Endothelial cell of umbilical vein (primary cell): ENCODE measurements at regions of chr1 and their contacts with region 1.

Region 1: DNA sequence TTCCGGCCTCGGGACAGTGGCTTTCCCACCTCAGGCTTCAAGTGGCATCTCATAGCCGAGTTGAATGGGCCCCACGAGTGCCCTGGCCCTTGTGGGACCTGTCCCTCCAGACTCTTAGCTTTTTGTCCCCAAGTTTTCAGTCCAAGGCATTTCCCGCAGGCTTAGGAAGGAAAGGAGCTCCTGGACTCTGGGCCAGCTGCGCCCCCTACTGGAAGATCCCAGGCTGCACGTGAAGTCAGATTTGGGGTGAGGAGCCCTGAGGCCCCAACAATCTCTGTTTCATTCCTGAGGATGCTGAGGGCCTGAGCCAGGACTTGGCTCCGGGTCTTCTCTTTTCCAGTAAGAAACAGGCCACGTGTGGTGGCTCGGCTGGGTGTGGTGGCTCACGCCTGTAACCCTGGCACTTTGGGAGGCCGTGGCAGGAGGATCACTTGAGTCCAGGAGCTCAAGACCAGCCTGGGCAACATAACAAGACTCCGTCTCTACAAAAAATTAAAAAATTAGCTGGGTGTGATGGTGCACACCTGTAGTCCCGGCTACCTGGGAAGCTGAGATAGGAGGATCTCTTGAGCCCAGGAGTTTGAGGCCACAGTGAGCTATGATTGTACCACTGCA is 67.4 kb downstream of the ARHGEF10L start:
- DNase-seq: peak; percentile 48
- H3K4me3 ChIP-seq: no peak overlapping the region
- H3K27ac ChIP-seq: no peak overlapping the region
- H3K4me1 ChIP-seq: no peaks in the 10 kb centered on the region
- H3K27me3 ChIP-seq: no peaks in the 10 kb centered on the region
- CTCF ChIP-seq: peak; percentile 86 to 94
- POLR2A ChIP-seq: no peak

Region 2: GRCh38 chr1:17274186-17275170 is 332.5 kb before region 1 on chr1:
- CTCF ChIA-PET with region 1: no interaction called
- POLR2A ChIA-PET with region 1: no interaction called
- dilution Hi-C with region 1: no loop called
- intact Hi-C with region 1: no loop called
- DNase-seq: peak; percentile 36
- H3K4me3 ChIP-seq: no peak overlapping the region
- H3K27ac ChIP-seq: no peak overlapping the region
- H3K4me1 ChIP-seq: no peaks in the 10 kb centered on the region
- H3K27me3 ChIP-seq: no peaks in the 10 kb centered on the region
- CTCF ChIP-seq: peak; percentile 72 to 91
- POLR2A ChIP-seq: no peak

Region 3: DNA sequence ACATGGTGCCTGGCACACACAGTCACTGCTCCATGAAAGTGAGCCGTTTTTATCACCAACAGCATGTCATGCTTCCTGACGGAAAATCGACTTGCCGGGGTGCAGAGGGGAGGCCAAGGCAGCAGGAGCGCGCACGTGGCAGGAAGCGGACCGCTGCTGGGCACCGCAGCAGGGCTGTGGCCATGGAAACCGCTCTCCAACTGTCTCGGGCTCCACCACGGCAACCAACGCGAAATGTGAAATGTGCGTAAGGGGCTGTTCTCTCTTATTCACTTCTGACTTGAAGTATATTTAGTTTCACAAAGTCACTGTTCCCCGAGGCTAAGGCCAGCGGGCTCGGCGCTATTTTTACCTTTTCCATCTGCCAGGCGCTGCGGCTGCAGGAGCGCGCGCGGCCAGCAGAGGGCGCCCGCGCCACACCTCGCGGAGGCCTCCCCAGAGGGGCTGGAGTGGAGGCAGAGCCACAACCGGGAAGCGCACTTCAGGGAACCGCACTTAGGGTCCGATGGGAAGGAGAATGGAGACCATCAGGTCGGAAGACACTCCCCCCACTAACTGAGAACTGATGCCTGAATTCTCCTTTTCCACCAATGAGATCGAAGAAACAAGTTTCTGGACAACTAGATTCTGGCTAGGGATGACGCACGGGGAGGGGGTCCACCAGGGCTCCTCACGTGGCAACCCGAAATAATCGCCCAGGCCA is 187.2 kb before region 1 on chr1:
- CTCF ChIA-PET with region 1: interaction called, 3 read pairs
- POLR2A ChIA-PET with region 1: no interaction called
- dilution Hi-C with region 1: no loop called
- intact Hi-C with region 1: loop called (anchors 1 kb)
- DNase-seq: peak; percentile 57
- H3K4me3 ChIP-seq: no peak overlapping the region
- H3K27ac ChIP-seq: no peak overlapping the region
- H3K4me1 ChIP-seq: no peaks in the 10 kb centered on the region
- H3K27me3 ChIP-seq: no peaks in the 10 kb centered on the region
- CTCF ChIP-seq: peak; percentile 99
- POLR2A ChIP-seq: no peak

Region 4: DNA sequence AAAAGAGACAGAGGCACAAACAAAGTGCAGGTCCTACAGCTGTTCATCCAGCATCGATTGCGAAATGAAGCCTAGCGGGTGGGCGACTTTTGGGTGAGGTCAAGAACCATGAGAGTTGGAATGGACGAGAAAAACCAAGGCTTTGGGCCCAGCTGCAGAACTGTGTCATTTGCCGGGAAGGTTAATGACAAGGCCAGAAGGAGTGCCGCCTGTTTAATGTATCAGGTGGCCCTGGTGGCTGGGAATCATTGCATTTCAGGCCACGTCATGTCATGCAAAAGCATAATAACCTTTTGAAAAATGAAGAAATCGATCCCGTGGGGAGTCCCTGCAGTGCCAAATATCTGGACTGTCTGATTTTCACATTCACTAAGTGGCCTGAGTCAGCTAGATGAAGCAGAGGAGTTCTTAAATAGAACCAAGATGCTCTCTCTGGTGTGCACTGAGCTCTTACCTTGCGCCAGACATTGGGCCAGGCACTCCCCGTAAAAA is 159.4 kb before region 1 on chr1:
- CTCF ChIA-PET with region 1: no interaction called
- POLR2A ChIA-PET with region 1: no interaction called
- dilution Hi-C with region 1: no loop called
- intact Hi-C with region 1: no loop called
- DNase-seq: no peak
- H3K4me3 ChIP-seq: no peak overlapping the region
- H3K27ac ChIP-seq: no peak overlapping the region
- H3K4me1 ChIP-seq: no peaks in the 10 kb centered on the region
- H3K27me3 ChIP-seq: peaks cover 0 to 3% of the 10 kb centered on the region in 2 experiments
- CTCF ChIP-seq: no peak
- POLR2A ChIP-seq: no peak

Region 5: GRCh38 chr1:17460245-17460644 is 146.7 kb before region 1 on chr1:
- CTCF ChIA-PET with region 1: no interaction called
- POLR2A ChIA-PET with region 1: no interaction called
- dilution Hi-C with region 1: no loop called
- intact Hi-C with region 1: no loop called
- DNase-seq: no peak
- H3K4me3 ChIP-seq: no peak overlapping the region
- H3K27ac ChIP-seq: no peak overlapping the region
- H3K4me1 ChIP-seq: no peaks in the 10 kb centered on the region
- H3K27me3 ChIP-seq: no peaks in the 10 kb centered on the region
- CTCF ChIP-seq: no peak
- POLR2A ChIP-seq: no peak

Region 6: GRCh38 chr1:17502326-17502778 is 104.6 kb before region 1 on chr1:
- CTCF ChIA-PET with region 1: interaction called, 374 read pairs
- POLR2A ChIA-PET with region 1: interaction called, 3 read pairs
- dilution Hi-C with region 1: no loop called
- intact Hi-C with region 1: loop called (anchors 1 kb)
- DNase-seq: peak; percentile 50
- H3K4me3 ChIP-seq: no peak overlapping the region
- H3K27ac ChIP-seq: no peak overlapping the region
- H3K4me1 ChIP-seq: no peaks in the 10 kb centered on the region
- H3K27me3 ChIP-seq: no peaks in the 10 kb centered on the region
- CTCF ChIP-seq: peak; percentile 82 to 92
- POLR2A ChIP-seq: no peak

Region 7: GRCh38 chr1:17540255-17541001 is 66.5 kb before region 1 on chr1:
- CTCF ChIA-PET with region 1: interaction called, 20 read pairs
- POLR2A ChIA-PET with region 1: no interaction called
- dilution Hi-C with region 1: no loop called
- intact Hi-C with region 1: no loop called
- DNase-seq: no peak
- H3K4me3 ChIP-seq: peak overlapping the region; percentile 34 to 77 (median 62)
- H3K27ac ChIP-seq: peak overlapping the region; percentile 25
- H3K4me1 ChIP-seq: no peaks in the 10 kb centered on the region
- H3K27me3 ChIP-seq: peaks cover 3 to 6% of the 10 kb centered on the region in 2 experiments
- CTCF ChIP-seq: no peak
- POLR2A ChIP-seq: no peak

Region 8: GRCh38 chr1:17581389-17582123 is 25.4 kb before region 1 on chr1:
- CTCF ChIA-PET with region 1: interaction called, 31 read pairs
- POLR2A ChIA-PET with region 1: no interaction called
- dilution Hi-C with region 1: no loop called
- intact Hi-C with region 1: no loop called
- DNase-seq: no peak
- H3K4me3 ChIP-seq: no peak overlapping the region
- H3K27ac ChIP-seq: no peak overlapping the region
- H3K4me1 ChIP-seq: no peaks in the 10 kb centered on the region
- H3K27me3 ChIP-seq: no peaks in the 10 kb centered on the region
- CTCF ChIP-seq: no peak
- POLR2A ChIP-seq: no peak

Region 9: DNA sequence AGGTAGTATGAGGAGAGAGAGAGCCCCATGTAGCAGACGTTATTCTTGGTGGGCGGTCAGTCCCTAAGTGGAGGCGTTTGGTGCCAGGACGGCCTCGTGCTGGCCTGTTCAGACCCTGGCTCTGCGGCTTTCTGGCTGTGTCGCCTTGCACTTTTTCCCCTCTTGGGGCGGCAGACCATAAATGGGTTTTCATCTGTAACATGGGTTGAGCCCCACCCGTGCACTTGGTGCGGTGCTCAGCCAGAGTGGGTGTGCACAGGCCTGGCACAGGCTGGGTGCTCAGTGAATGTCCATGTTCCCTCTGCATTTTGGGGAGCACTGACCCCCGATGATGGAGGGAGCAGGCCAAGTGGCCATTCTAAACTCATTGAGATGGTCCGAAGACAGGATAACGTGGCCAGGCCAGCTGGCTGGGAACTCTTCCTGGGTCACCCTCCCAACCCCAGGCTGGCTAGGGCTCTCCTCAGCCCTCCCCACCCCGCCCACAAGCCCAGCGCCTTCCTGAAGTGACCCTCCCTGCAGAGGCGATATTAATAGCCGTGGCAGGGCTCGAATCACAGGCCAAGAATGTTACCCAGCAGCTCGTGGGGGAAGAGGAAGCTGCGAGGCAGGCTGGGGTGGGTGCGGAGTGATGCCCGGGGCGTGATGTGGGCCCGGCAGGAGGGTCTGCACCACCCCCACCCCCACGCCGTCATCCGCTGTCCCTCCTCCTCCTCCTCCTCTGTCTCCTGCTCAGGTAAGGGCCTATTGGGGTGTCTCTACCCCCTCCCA is 11.0 kb after region 1 on chr1:
- CTCF ChIA-PET with region 1: interaction called, 10 read pairs
- POLR2A ChIA-PET with region 1: no interaction called
- dilution Hi-C with region 1: no loop called
- intact Hi-C with region 1: no loop called
- DNase-seq: no peak
- H3K4me3 ChIP-seq: no peak overlapping the region
- H3K27ac ChIP-seq: no peak overlapping the region
- H3K4me1 ChIP-seq: no peaks in the 10 kb centered on the region
- H3K27me3 ChIP-seq: no peaks in the 10 kb centered on the region
- CTCF ChIP-seq: no peak
- POLR2A ChIP-seq: no peak